Left ventricle myocardium superior (tissue), 1 donor: ENCODE measurements at regions of chr9 and their contacts with region 1.

Region 1: DNA sequence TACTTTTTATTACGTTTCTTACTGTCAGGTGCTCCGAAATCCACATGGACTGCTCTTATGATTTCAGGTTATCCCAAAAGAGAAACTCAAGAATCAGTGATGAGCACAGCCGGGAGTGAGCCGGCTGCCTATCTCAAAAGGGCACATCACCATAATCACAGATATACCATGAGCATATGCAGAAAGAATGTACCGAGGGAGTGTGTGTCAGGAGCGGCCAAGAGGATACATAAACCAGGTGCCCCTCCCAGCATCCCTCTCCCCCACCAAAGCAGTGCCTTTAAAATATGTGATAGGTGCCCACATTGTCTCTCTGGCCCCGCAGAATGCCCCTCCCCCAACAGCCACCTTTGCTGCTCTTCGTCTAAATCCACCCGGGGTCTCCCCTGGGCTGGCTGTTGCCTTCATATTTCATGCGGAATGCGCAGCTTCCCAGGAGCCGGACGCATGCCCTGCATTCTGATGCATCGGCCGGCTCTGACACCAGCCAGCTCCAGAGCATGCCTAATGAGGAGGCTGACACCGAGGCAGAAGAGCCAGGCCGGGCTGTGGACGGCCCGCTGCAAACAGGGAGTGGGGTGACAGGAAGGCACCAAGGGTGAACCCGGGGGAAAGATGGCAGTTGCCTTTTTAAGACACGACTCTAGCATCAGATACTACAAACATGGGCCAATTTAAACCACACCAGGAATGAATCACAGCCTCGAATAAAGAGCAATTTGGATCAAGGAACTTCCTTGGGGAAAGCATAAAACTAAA is 652.3 kb downstream of the BNC2 start:
- DNase-seq: no peak
- ATAC-seq: no peak

Region 2: DNA sequence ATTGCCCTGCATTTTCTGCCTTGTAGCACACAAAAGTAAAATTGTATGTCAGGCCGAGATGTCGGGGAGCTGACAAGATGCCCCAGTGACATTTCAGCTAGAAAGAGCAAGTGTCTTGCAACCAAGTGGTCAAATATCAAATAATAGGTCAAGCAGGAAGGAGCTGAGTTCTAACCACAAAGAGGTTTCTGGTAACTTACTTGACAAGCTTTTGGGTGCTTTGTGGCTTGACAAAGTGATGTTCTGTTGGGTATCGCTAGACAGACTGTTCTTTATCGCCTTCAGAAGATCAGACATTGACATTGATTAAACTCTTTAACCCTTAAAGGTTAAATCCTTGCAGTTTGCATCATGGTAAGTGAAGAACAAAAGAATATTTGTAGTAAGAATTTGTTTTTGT is 245.4 kb before region 1 on chr9:
- intact Hi-C with region 1: loop called (anchors 5 kb)
- DNase-seq: no peak
- ATAC-seq: no peak